OCI-LY7 (cell line): ENCODE measurements at regions of chr17 and their contacts with region 1.

Region 1: GRCh38 chr17:47889734-47890529 is 6.1 kb upstream of the SP2 start:
- DNase-seq: peak; percentile 83
- H3K4me3 ChIP-seq: no peak overlapping the region
- H3K27ac ChIP-seq: no peak overlapping the region
- H3K4me1 ChIP-seq: peaks cover 22% of the 10 kb centered on the region
- CTCF ChIP-seq: peak; percentile 95

Region 2: DNA sequence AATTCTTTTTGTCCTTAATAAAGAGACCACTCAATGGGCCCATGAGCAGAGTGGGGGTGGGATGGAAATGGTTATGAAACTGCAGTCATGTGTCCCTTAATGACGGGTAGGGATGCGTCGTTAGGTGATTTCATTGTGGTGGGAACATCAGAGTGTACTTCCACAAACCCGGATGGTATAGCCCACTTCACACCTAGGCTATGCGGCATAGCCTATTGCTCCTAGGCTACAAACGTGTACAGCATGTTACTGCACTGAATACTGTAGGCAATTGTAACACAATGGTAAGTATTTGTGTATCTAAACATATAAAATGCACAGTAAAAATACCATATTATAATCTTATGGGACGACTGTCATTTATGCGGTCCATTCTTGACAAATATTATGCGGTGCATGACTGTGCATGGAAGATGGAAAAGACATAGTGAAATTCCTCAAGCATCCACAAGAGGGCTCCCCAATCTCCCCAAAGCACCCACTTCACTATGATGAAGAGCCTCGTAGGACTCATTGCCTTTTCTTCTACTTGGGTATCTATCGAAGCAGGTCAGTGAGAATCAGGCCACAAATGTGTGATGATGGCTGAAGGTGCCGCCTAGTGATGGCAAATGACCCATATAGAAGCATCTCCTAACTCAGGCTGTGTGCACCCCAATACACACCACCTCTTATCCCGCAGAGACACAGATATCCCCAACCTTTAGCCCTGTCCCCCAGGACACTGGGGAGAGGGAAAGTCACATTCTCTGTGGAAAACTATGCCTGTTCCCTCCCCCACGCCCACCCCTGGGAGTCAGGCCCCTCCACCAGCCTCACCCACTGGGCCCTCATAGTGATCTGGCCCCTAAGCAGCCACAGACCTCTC is 113.4 kb before region 1 on chr17:
- CTCF ChIA-PET with region 1: no interaction called
- POLR2A ChIA-PET with region 1: no interaction called
- intact Hi-C with region 1: loop called (anchors 2 kb)
- DNase-seq: peak; percentile 55
- H3K4me3 ChIP-seq: no peak overlapping the region
- H3K27ac ChIP-seq: no peak overlapping the region
- H3K4me1 ChIP-seq: no peaks in the 10 kb centered on the region
- CTCF ChIP-seq: peak; percentile 84

Region 3: DNA sequence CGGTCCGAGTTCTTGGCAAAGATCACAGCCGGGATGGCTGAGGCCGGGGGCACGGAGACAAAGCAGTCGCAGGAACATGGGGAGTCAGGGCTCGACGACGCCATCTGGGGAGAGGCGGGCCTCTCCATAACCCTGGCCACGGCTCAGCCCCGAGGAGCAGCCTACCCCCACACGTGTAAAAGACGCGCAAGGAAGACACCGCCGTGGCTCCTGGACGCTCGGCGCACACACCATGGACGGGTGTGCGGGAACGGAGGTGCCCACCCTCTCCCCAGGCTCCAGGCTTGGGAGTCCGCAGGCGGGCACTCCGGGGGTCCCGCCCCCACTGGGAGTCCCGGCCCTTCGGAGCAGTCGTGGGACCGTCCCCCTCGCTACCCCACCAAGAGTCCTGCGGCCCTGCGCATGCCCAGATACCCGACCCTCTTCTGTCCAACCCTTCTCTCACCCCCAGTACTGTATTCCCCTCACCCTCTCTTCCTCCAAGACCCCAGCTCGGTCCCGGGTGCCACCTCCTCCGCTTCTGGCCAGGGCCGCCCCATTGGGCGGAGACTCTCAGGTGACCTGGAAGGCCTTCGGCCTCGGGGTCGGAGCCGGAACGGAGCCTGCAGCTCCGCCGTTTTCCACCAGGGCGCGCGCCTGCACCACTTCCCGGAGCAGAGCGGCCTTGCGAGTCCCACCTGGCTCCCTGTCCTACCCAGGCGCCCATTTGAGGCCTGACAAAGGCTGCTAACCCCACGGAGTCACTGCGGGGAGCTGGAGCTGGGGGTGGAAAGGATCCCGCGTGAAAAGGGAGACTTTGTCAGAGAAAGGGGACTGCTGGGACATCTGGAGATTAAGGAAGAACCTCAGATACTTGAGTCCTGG is 49.0 kb before region 1 on chr17 and contains the start of gene SCRN2:
- CTCF ChIA-PET with region 1: interaction called, 6 read pairs
- POLR2A ChIA-PET with region 1: interaction called, 13 read pairs
- intact Hi-C with region 1: loop called (anchors 1 kb)
- DNase-seq: peak; percentile 88
- H3K4me3 ChIP-seq: peak within 1 kb of the TSS; percentile 78
- H3K27ac ChIP-seq: no peak within 1 kb of the TSS
- H3K4me1 ChIP-seq: peaks cover 37% of the 10 kb centered on the region
- CTCF ChIP-seq: peak; percentile 88
- total RNA-seq, gene SCRN2: 33.9 and 42.9 TPM in 2 replicates